Endothelial cell of umbilical vein (primary cell): ENCODE measurements at regions of chr14 and their contacts with region 1.

Region 1: DNA sequence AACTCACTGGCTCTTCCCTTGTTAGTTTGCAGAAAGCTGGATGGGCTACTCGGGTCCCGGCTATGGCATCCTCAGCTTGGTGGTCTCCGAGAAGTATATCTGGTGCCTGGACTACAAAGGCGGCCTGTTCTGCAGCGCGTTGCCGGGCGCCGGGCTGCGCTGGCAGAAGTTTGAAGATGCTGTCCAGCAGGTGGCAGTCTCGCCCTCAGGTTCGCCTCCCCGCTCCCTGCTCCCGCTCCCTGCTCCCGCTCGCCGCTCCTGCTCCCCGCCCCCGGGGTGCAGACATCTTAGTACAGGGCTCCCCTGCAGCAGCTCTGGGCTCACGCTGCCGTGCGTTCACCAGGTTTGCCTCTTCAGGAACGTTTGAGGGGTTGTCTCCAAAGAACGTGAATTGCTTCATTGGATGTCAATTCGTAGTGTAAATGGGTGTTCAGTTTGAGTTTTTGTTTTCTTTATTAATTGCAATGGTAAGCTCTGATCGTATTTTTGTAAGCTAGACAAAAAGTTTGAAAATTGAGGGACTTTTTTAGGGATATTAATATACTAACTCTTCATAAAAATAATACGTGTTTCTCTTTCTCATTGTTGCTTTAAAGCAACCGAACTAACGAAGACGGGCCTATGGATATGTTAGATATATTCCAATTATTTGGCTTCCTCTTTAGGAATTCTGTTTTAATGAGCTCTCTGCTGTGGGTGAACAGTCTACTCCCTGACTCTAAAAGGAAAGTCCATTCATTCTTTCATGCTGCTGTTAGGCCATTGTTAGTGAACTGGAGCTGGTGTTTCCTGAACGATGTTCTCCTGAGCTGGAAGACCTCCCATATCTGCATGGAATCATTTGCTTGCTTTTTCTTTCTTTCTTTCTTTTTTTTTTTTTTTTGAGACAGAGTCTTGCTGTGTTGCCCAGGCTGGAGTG is 71.3 kb downstream of the ANKRD9 start:
- DNase-seq: peak; percentile 73
- H3K4me3 ChIP-seq: peak overlapping the region in 1 of 3 experiments; percentile 13
- H3K27ac ChIP-seq: no peak overlapping the region
- H3K4me1 ChIP-seq: peaks cover 2% of the 10 kb centered on the region
- H3K27me3 ChIP-seq: no peaks in the 10 kb centered on the region
- CTCF ChIP-seq: peak; percentile 79 to 84
- POLR2A ChIP-seq: no peak

Region 2: GRCh38 chr14:102504328-102504999 is 66.2 kb after region 1 on chr14:
- CTCF ChIA-PET with region 1: interaction called, 12 read pairs
- POLR2A ChIA-PET with region 1: no interaction called
- dilution Hi-C with region 1: loop called (anchors 10 kb)
- intact Hi-C with region 1: loop called (anchors 2 kb)
- DNase-seq: no peak
- H3K4me3 ChIP-seq: no peak overlapping the region
- H3K27ac ChIP-seq: peak overlapping the region; percentile 69
- H3K4me1 ChIP-seq: peaks cover 30% of the 10 kb centered on the region
- H3K27me3 ChIP-seq: no peaks in the 10 kb centered on the region
- CTCF ChIP-seq: no peak
- POLR2A ChIP-seq: no peak

Region 3: GRCh38 chr14:102509744-102510615 is 71.7 kb after region 1 on chr14 and contains the start of gene ANKRD9:
- CTCF ChIA-PET with region 1: interaction called, 66 read pairs
- POLR2A ChIA-PET with region 1: no interaction called
- dilution Hi-C with region 1: loop called (anchors 10 kb)
- intact Hi-C with region 1: loop called (anchors 2 kb)
- DNase-seq: peak; percentile 94
- H3K4me3 ChIP-seq: peak within 1 kb of the TSS; percentile 3 to 60 (median 57)
- H3K27ac ChIP-seq: peak within 1 kb of the TSS; percentile 63
- H3K4me1 ChIP-seq: peaks cover 6% of the 10 kb centered on the region
- H3K27me3 ChIP-seq: no peaks in the 10 kb centered on the region
- CTCF ChIP-seq: no peak
- POLR2A ChIP-seq: no peak
- total RNA-seq, gene ANKRD9: 24.6 and 25.9 TPM in 2 replicates

Region 4: GRCh38 chr14:102516531-102517415 is 78.5 kb after region 1 on chr14:
- CTCF ChIA-PET with region 1: interaction called, 66 read pairs
- POLR2A ChIA-PET with region 1: no interaction called
- dilution Hi-C with region 1: no loop called
- intact Hi-C with region 1: loop called (anchors 1 kb)
- DNase-seq: peak; percentile 42
- H3K4me3 ChIP-seq: peak overlapping the region; percentile 46 to 56 (median 55)
- H3K27ac ChIP-seq: no peak overlapping the region
- H3K4me1 ChIP-seq: no peaks in the 10 kb centered on the region
- H3K27me3 ChIP-seq: no peaks in the 10 kb centered on the region
- CTCF ChIP-seq: peak; percentile 75 to 85
- POLR2A ChIP-seq: no peak

Region 5: GRCh38 chr14:102917469-102918211 is 479.4 kb after region 1 on chr14:
- CTCF ChIA-PET with region 1: no interaction called
- POLR2A ChIA-PET with region 1: no interaction called
- dilution Hi-C with region 1: no loop called
- intact Hi-C with region 1: loop called (anchors 2 kb)
- DNase-seq: peak; percentile 47
- H3K4me3 ChIP-seq: no peak overlapping the region
- H3K27ac ChIP-seq: no peak overlapping the region
- H3K4me1 ChIP-seq: no peaks in the 10 kb centered on the region
- H3K27me3 ChIP-seq: peaks cover 7 to 8% of the 10 kb centered on the region in 2 experiments
- CTCF ChIP-seq: peak; percentile 72 to 78
- POLR2A ChIP-seq: no peak